ENCODE measurements at regions of chr15 and their contacts with region 1.

Region 1: DNA sequence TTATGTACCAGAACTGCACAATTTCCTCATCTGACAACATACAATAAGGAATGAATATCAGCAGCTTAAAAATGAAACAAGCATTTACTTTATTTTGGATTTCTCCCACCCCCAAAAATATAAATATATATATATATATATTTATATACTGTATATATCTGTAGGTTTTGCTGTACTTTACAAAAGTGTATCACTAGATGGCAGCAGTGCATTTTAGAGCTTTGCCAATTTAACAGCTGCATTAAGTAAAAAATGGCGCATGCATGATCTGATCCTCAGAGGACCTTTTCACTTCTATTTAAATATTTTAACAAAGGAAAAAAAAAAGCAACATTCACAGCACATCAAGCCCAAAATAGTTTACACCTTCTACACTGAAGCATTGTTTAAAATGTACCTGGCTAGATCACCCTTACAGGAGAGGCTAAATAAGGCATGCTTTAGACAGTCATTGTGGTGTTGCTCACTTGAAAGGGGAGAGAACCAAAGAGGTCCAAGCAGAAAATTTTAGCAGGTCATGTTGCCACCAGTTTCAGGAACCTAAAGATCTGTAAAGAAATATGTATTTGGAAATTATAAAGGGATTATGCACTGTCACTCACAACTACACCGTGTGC is 72.6 kb downstream of the NPTN start:
- DNase-seq: peak in 2 of 9 experiments; percentile 56 to 66
- ATAC-seq: peak; percentile 52
- H3K4me3 ChIP-seq: no peak overlapping the region
- H3K4me3 Mint-ChIP-seq: no peak overlapping the region
- H3K27ac ChIP-seq: no peak overlapping the region
- H3K27ac Mint-ChIP-seq: no peak overlapping the region
- H3K4me1 ChIP-seq: no peaks in the 10 kb centered on the region
- H3K4me1 Mint-ChIP-seq: no peaks in the 10 kb centered on the region
- H3K27me3 ChIP-seq: no peaks in the 10 kb centered on the region
- H3K27me3 Mint-ChIP-seq: no peaks in the 10 kb centered on the region
- CTCF ChIP-seq: peak; percentile 48

Region 2: GRCh38 chr15:73550190-73550589 is 10.4 kb before region 1 on chr15:
- CTCF ChIA-PET with region 1: interaction called, 10 read pairs
- POLR2A ChIA-PET with region 1: no interaction called
- intact Hi-C with region 1: no loop called
- DNase-seq: no peak
- ATAC-seq: no peak
- H3K4me3 ChIP-seq: no peak overlapping the region
- H3K4me3 Mint-ChIP-seq: no peak overlapping the region
- H3K27ac ChIP-seq: no peak overlapping the region
- H3K27ac Mint-ChIP-seq: no peak overlapping the region
- H3K4me1 ChIP-seq: no peaks in the 10 kb centered on the region
- H3K4me1 Mint-ChIP-seq: no peaks in the 10 kb centered on the region
- H3K27me3 ChIP-seq: no peaks in the 10 kb centered on the region
- H3K27me3 Mint-ChIP-seq: no peaks in the 10 kb centered on the region
- CTCF ChIP-seq: no peak

Measured in CD8-positive, alpha-beta T cell (primary cell).